ENCODE measurements at regions of chr5 and their contacts with region 1.

Region 1: DNA sequence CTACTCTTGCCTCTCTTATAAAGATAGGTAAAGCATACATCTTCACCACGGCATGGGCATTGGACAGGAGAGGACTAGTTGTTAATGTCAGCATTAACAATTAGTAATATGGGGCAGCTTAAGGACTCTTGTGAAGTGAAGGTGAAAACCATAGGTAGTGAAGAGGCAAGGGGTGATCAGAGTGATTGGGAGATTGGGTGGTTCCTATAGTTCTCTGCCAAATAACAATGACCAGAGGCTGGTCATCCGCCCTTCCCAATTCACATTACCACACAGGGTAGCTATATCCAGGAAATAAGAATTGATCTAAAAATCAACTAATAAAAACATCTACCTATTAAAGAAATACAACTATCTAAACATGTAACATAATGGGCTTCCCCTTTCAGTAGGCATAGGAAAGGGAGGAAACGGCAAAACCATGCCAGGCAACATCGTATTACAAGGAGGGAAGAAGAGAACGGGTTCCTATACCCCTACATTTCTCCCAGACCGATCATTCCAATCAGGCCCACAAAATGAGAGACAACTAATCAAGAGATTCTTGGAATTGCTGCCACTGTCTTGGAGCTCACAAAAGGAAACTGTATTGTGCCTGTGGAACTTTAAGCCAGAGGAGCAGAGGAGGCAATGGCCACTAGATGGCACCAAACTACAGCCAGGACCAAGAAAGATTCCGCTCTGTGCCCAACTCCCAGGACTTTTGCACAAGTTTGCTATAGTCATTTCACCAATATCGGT is 121.6 kb downstream of the FBXL17 start:
- DNase-seq: peak; percentile 73
- H3K4me3 Mint-ChIP-seq: no peak overlapping the region
- H3K27ac Mint-ChIP-seq: no peak overlapping the region
- H3K4me1 Mint-ChIP-seq: no peaks in the 10 kb centered on the region
- H3K27me3 Mint-ChIP-seq: no peaks in the 10 kb centered on the region

Region 2: DNA sequence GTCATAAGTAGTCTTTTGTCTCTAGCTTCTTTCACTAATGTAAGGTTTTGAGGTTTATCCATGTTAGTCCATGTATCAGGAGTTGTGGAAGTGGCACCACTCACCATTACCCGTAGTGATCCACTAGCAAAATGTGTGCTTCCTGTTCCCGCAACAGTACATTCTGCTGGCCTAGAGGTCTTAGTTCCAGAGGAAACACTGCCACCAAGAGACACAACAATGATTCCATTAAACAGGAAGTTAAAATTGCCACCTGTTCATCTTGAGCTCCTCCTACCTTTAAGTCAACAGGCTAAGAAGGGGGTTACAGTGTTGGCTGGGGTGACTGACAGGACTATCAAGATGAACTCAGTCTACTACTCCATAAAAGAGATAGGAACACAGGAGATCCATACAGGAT is 28.9 kb before region 1 on chr5:
- CTCF ChIA-PET with region 1: no interaction called
- DNase-seq: no peak
- H3K4me3 Mint-ChIP-seq: no peak overlapping the region
- H3K27ac Mint-ChIP-seq: no peak overlapping the region
- H3K4me1 Mint-ChIP-seq: no peaks in the 10 kb centered on the region
- H3K27me3 Mint-ChIP-seq: no peaks in the 10 kb centered on the region

Region 3: DNA sequence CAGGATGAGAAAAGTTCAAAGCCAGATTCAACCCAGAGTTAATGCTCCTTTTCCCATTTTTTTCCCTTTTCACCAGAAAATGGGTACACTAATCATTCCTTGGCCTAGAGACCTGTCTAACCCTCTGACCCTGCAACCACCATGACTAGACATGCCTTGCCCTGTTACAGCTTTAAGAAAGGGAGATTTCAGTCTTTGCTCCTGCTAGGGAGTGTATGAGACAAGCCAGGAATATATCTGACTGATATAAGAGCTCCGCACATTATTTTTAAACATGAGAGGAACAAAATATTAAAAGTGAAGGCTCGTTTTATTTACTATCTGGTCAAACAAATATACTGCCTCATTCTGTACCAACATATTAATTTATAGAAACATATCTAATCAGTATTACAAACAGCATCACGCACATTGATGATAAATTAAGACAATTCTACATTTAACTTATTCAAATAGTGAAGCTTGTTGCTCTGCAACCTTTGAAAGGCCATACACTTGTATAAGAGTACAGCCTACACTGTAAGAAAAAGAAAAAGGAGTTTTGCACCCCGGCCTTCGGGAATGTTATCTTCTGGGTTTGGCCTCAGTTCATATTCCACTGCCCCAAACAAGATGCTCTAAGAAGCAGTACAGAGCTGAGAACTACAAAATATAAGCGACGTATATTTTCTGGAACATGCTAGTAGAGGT is 11.0 kb before region 1 on chr5:
- CTCF ChIA-PET with region 1: interaction called, 10 read pairs
- DNase-seq: no peak
- H3K4me3 Mint-ChIP-seq: no peak overlapping the region
- H3K27ac Mint-ChIP-seq: no peak overlapping the region
- H3K4me1 Mint-ChIP-seq: no peaks in the 10 kb centered on the region
- H3K27me3 Mint-ChIP-seq: no peaks in the 10 kb centered on the region

Region 4: DNA sequence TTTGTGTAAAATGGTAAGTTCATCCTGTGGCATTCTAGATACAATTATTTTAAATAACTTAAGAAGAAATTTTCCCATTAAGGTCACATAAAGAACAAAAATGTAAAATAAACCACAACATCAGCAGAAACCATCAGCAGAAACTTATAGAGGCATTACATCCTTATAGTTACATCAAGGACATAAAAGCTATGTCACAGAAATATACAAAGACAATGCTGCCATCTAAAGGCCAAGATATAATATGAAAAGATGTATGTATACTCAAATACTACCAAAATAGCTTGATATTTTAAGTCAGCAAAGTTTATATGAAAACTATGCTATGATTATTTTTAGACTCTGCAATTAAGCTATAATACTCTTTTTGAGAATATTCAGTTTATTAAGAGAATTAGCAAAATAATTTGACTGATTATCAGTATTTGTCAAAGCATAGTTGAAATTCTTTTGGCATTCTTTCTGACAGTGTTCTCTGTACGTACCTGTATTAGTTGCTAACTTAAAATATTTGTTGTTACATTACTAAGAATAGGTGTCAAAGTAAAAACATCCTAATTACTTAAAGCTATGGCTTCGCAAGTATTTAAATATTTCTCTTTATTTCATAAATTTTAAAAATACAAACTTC is 85.4 kb after region 1 on chr5:
- CTCF ChIA-PET with region 1: interaction called, 20 read pairs
- DNase-seq: no peak
- H3K4me3 Mint-ChIP-seq: no peak overlapping the region
- H3K27ac Mint-ChIP-seq: no peak overlapping the region
- H3K4me1 Mint-ChIP-seq: no peaks in the 10 kb centered on the region
- H3K27me3 Mint-ChIP-seq: no peaks in the 10 kb centered on the region